Vagina (tissue), 2 donors: ENCODE measurements at regions of chr1 and their contacts with region 1.

Region 1: GRCh38 chr1:230867903-230868735 is at the start of gene C1orf198:
- DNase-seq: no peak
- H3K4me3 ChIP-seq: peak within 1 kb of the TSS; percentile 87 to 93
- H3K27ac ChIP-seq: peak within 1 kb of the TSS; percentile 85
- H3K4me1 ChIP-seq: peaks cover 48% of the 10 kb centered on the region
- H3K27me3 ChIP-seq: no peaks in the 10 kb centered on the region
- CTCF ChIP-seq: no peak
- POLR2A ChIP-seq: peak in 1 of 2 donors; percentile 69
- total RNA-seq, gene C1orf198: 38.8 TPM

Region 2: DNA sequence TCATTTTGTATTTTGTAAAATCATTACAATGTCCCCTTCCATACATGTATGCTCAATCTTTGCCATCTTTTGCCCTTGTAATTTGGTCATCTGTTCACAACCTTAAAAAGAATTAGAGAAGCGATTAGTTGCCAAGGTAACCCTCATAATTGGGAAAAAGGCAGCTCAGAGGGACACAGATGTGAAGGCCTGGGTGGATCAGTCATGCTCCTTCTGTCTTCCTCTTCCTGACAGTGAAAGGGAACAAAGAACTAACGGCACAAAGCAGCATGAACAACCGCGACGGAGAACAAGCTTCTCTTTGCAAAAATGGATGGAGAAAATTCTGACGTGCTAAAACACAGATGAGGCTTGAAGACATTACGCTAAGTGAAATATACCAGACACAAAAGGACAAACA is 304.5 kb before region 1 on chr1:
- intact Hi-C with region 1: no loop called
- DNase-seq: no peak
- H3K4me3 ChIP-seq: no peak overlapping the region
- H3K27ac ChIP-seq: no peak overlapping the region
- H3K4me1 ChIP-seq: no peaks in the 10 kb centered on the region
- H3K27me3 ChIP-seq: no peaks in the 10 kb centered on the region
- CTCF ChIP-seq: no peak
- POLR2A ChIP-seq: no peak

Region 3: DNA sequence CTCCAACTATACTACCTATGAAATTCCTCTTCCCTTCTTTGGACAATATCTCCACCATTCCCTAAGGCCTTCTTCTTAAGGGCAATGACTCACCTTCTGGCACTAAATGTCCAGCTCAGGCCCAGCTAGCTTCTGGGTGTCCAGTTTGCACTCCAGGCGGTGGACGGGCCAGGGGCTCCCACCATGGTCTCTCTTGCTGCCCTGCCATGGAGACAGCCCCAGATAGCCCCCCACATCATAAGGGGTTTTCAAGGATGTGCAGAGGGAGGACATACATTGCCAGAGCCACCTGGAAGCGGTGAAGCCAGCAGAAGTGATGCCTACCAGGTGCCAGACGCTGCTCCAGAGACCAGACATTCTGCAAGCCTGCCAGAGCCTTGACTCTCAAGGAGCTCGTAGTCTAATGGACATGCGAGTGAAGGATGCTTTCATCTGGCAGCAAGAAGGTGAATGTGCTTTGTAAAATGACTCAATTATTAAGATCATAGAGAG is 43.5 kb before region 1 on chr1:
- intact Hi-C with region 1: loop called (anchors 5 kb)
- DNase-seq: peak in 1 of 2 donors; percentile 52
- H3K4me3 ChIP-seq: no peak overlapping the region
- H3K27ac ChIP-seq: peak overlapping the region; percentile 81
- H3K4me1 ChIP-seq: peaks cover 56% of the 10 kb centered on the region
- H3K27me3 ChIP-seq: no peaks in the 10 kb centered on the region
- CTCF ChIP-seq: no peak
- POLR2A ChIP-seq: no peak